ENCODE measurements at regions of chr11 and their contacts with region 1.

Region 1: DNA sequence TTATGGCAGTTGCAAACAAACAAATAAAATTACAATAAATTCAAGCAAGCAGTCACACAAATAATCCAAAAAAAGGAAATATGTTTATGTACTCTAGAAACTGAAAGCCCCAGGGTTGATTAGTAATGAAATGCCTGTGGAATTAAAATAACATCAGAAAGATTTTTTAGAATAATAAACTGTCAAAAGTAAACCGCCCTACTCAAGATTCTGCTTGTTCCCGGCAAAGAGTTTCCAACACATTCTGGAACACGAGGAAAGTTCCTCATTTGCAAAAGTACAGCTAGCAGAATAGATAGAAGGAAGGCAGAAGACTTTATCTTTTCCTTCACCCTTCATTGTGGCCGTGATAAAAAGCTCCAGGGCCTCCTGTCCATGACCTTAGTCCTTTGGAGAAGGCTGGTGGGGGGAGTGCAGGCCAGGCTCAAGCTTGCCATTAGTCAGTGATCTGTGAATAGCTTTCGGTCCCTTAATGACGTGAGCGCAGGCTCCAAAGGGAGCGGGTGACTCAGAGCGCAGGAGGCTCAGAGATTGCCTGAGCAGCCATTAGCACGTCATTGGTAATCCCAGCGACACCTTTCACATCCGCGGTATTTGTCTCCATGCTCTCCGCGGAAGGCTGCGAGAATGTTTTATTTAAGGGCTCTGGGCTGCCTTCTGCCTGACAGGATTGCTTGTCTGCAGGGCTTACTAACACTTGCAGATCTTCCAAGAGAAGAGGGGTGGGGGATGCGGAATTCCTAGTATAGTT is 458.3 kb downstream of the METTL15 start:
- DNase-seq: peak; percentile 74 to 91
- H3K4me3 ChIP-seq: peak overlapping the region; percentile 23 to 41
- H3K27ac ChIP-seq: peak overlapping the region; percentile 65 to 73
- H3K4me1 ChIP-seq: peaks cover 0 to 6% of the 10 kb centered on the region in 2 donors
- H3K27me3 ChIP-seq: no peaks in the 10 kb centered on the region
- CTCF ChIP-seq: no peak

Region 2: GRCh38 chr11:28107748-28108618 is 458.5 kb before region 1 on chr11 and contains the starts of genes KIF18A and METTL15:
- intact Hi-C with region 1: loop called (anchors 2 kb)
- DNase-seq: peak; percentile 98 to 100
- H3K4me3 ChIP-seq: peak within 1 kb of the TSS; percentile 74 to 76
- H3K27ac ChIP-seq: peak within 1 kb of the TSS; percentile 87 to 88
- H3K4me1 ChIP-seq: peaks cover 4 to 15% of the 10 kb centered on the region in 2 donors
- H3K27me3 ChIP-seq: no peaks in the 10 kb centered on the region
- CTCF ChIP-seq: no peak
- total RNA-seq, gene KIF18A: not detected
- total RNA-seq, gene METTL15: 0.32 TPM

Region 3: DNA sequence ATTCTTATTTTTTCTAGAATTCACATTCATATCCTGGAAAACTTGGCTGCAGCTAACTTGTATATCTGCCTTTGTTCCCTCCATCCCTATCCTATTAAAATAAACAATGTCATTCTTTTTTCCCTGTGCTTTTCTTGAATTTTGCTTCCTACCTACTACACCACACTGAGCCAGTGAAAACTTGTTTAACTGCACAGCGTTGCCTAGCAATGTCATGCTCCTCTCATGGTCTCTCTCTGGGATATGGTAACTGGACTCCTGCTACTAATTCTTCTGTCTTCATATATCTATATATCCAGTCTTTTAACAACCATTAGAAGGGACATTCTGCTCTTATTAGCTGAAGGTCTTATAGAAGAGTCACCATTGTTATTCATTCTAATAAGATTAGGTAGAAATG is 24.0 kb before region 1 on chr11:
- intact Hi-C with region 1: no loop called
- DNase-seq: no peak
- H3K4me3 ChIP-seq: no peak overlapping the region
- H3K27ac ChIP-seq: no peak overlapping the region
- H3K4me1 ChIP-seq: no peaks in the 10 kb centered on the region
- H3K27me3 ChIP-seq: no peaks in the 10 kb centered on the region
- CTCF ChIP-seq: no peak

Region 4: GRCh38 chr11:28842716-28843115 is 276.2 kb after region 1 on chr11:
- intact Hi-C with region 1: loop called (anchors 10 kb)
- DNase-seq: no peak
- H3K4me3 ChIP-seq: no peak overlapping the region
- H3K27ac ChIP-seq: no peak overlapping the region
- H3K4me1 ChIP-seq: no peaks in the 10 kb centered on the region
- H3K27me3 ChIP-seq: no peaks in the 10 kb centered on the region
- CTCF ChIP-seq: no peak

Region 5: DNA sequence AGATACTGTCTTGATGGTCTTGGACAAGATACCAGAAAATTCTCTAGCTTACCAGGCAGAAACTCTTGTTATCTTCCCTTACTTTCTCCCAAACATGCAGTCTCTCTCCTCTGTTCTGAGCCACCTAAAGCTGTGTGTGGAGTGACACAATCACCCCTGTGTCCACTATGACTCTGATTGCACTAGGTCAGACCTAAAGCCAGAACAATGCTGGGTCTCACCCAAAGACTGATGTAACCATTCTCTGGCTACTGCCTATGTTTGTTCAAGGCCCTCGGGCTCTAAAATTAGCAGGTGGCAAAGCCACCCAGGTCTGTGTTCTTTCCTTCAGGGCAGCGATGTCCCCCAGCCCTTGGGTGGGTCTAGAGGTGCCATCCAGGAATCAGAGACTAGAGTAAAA is 1249.8 kb after region 1 on chr11:
- intact Hi-C with region 1: no loop called
- DNase-seq: no peak
- H3K4me3 ChIP-seq: no peak overlapping the region
- H3K27ac ChIP-seq: no peak overlapping the region
- H3K4me1 ChIP-seq: no peaks in the 10 kb centered on the region
- H3K27me3 ChIP-seq: no peaks in the 10 kb centered on the region
- CTCF ChIP-seq: no peak